Mammary epithelial cell (primary cell): ENCODE measurements at regions of chr5 and their contacts with region 1.

Region 1: GRCh38 chr5:34886392-34887119 is 28.7 kb downstream of the RAD1 start:
- DNase-seq: no peak
- H3K4me3 ChIP-seq: no peak overlapping the region
- H3K27ac ChIP-seq: no peak overlapping the region
- H3K4me1 ChIP-seq: no peaks in the 10 kb centered on the region
- H3K27me3 ChIP-seq: peaks cover 1% of the 10 kb centered on the region
- CTCF ChIP-seq: no peak

Region 2: GRCh38 chr5:33892620-33893137 is 993.9 kb before region 1 on chr5:
- CTCF ChIA-PET with region 1: no interaction called
- dilution Hi-C with region 1: no loop called
- in situ Hi-C with region 1: no loop called
- intact Hi-C with region 1: no loop called
- DNase-seq: peak; percentile 21
- H3K4me3 ChIP-seq: no peak overlapping the region
- H3K27ac ChIP-seq: no peak overlapping the region
- H3K4me1 ChIP-seq: peaks cover 7% of the 10 kb centered on the region
- H3K27me3 ChIP-seq: no peaks in the 10 kb centered on the region
- CTCF ChIP-seq: no peak

Region 3: DNA sequence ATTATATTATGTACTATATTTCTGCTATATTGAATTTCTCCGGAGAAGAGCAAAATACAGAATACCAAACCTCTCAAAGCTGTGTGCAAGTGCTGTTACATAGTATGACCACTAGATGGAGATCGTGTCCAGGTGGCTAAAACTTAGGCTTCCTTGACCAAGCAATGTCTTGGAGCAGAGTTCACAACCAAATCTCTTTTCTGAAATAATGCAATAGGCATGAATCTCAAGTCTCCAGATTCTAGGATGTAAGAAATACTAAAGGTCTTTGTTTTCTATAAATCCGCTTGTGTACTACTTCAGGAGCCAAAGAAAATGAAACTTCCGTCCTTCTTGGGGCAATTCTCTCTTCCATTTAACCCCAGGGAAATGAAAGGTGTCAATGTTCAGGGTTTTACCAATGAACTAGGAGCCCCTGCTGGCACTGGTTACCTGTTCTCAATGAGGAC is 412.0 kb before region 1 on chr5:
- CTCF ChIA-PET with region 1: no interaction called
- dilution Hi-C with region 1: no loop called
- in situ Hi-C with region 1: loop called in 1 of 2 experiments (anchors 5 kb)
- intact Hi-C with region 1: no loop called
- DNase-seq: peak; percentile 43
- H3K4me3 ChIP-seq: no peak overlapping the region
- H3K27ac ChIP-seq: no peak overlapping the region
- H3K4me1 ChIP-seq: no peaks in the 10 kb centered on the region
- H3K27me3 ChIP-seq: no peaks in the 10 kb centered on the region
- CTCF ChIP-seq: peak; percentile 96 to 98